ENCODE measurements at regions of chr20 and their contacts with region 1.

Region 1: DNA sequence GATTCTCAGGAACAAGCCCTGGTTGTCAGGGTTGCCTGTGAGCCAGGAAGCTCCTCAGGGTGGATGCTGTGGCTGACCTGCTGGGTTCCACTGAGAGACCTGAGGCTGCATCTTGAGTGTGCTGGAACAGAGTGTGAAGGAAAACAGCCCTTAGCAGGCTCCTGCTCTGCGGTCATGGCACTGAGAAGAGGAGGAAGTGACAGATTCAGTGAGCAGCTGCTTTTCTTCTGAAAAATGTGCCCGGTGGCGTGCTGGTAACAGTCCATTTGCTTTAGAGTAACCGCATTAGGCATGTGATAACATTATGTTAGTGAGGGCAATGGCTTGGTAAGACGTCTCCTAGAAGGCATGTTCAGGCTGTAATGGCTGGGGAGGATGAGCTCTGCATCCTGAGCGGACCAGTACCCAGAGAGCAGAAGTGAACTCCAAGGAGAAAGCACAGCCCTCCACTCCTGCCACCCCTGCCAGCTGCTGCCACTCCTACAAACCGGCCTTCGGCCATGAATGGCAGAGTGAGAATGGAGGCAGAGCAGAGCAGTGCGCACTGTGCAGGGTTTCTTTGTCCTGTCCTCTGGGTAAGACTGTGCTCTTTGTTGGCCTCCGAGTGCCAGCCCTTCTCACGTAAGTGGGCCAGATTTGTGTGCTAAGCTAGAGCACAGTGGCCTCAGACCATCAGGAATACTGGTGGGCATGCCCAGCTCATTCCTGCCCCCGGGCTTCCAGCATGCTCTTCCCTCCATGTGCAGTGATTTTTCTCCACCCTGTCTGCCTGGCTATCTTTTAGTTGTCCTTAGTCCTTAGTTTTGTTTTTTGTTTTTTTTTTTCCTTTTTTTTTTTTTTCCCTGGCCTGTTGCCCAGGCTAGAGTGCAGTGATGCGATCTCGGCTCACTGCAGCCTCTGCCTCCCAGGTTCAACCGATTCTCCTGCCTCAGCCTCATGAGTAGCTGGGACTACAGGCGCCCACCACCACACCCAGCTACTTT is 98.1 kb upstream of the VSTM2L start:
- DNase-seq: peak; percentile 56
- ATAC-seq: peak; percentile 81
- H3K4me3 Mint-ChIP-seq: peak overlapping the region; percentile 79
- H3K27ac Mint-ChIP-seq: peak overlapping the region; percentile 97
- H3K4me1 Mint-ChIP-seq: peaks cover 1% of the 10 kb centered on the region
- H3K27me3 Mint-ChIP-seq: no peaks in the 10 kb centered on the region
- CTCF ChIP-seq: no peak

Region 2: GRCh38 chr20:37758332-37758731 is 46.5 kb before region 1 on chr20:
- CTCF ChIA-PET with region 1: interaction called, 4 read pairs
- POLR2A ChIA-PET with region 1: no interaction called
- intact Hi-C with region 1: loop called (anchors 10 kb)
- DNase-seq: no peak
- ATAC-seq: no peak
- H3K4me3 Mint-ChIP-seq: no peak overlapping the region
- H3K27ac Mint-ChIP-seq: no peak overlapping the region
- H3K4me1 Mint-ChIP-seq: peaks cover 20% of the 10 kb centered on the region
- H3K27me3 Mint-ChIP-seq: no peaks in the 10 kb centered on the region
- CTCF ChIP-seq: no peak

Region 3: GRCh38 chr20:37777012-37777950 is 27.6 kb before region 1 on chr20:
- CTCF ChIA-PET with region 1: interaction called, 4 read pairs
- POLR2A ChIA-PET with region 1: interaction called, 14 read pairs
- intact Hi-C with region 1: loop called (anchors 1 kb)
- DNase-seq: no peak
- ATAC-seq: peak; percentile 43
- H3K4me3 Mint-ChIP-seq: peak overlapping the region; percentile 42
- H3K27ac Mint-ChIP-seq: peak overlapping the region; percentile 64
- H3K4me1 Mint-ChIP-seq: peaks cover 55% of the 10 kb centered on the region
- H3K27me3 Mint-ChIP-seq: no peaks in the 10 kb centered on the region
- CTCF ChIP-seq: no peak

Region 4: DNA sequence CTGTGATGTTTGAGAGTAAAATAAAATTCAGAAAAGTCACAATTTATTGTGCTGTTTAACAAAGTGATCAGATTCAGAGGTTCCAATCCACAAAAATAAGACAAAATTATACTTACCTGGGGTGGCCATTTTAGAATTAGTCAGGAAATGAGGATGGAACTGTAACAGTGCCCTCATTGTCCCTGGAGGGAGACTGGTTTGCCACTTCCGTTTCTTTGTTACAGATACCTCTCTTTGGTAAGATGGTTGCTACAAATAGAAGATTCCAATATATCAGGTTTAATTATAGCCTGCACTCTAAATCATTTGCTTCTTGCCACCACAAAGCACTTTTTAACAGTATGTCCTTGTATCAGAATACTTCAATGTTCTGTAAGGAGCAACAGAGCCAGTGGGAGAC is 15.5 kb before region 1 on chr20:
- CTCF ChIA-PET with region 1: no interaction called
- POLR2A ChIA-PET with region 1: interaction called, 7 read pairs
- intact Hi-C with region 1: loop called (anchors 1 kb)
- DNase-seq: no peak
- ATAC-seq: peak; percentile 97
- H3K4me3 Mint-ChIP-seq: peak overlapping the region; percentile 17
- H3K27ac Mint-ChIP-seq: peak overlapping the region; percentile 67
- H3K4me1 Mint-ChIP-seq: peaks cover 32% of the 10 kb centered on the region
- H3K27me3 Mint-ChIP-seq: no peaks in the 10 kb centered on the region
- CTCF ChIP-seq: no peak